Kidney (tissue), 22 donors: ENCODE measurements at regions of chr12 and their contacts with region 1.

Region 1: GRCh38 chr12:9750276-9751203 is 10.2 kb downstream of the CD69 start:
- DNase-seq: peak in 4 of 5 donors; percentile 18 to 83 (median 68)
- H3K4me3 ChIP-seq: peak overlapping the region in 2 of 3 donors; percentile 32 to 38
- H3K27ac ChIP-seq: no peak overlapping the region
- H3K4me1 ChIP-seq: no peaks in the 10 kb centered on the region
- H3K27me3 ChIP-seq: no peaks in the 10 kb centered on the region
- CTCF ChIP-seq: peak; percentile 88

Region 2: GRCh38 chr12:9925708-9926393 is 175.3 kb after region 1 on chr12:
- intact Hi-C with region 1: loop called (anchors 10 kb)
- DNase-seq: peak in 2 of 5 donors; percentile 28 to 49
- H3K4me3 ChIP-seq: peak overlapping the region in 2 of 3 donors; percentile 37 to 58
- H3K27ac ChIP-seq: no peak overlapping the region
- H3K4me1 ChIP-seq: no peaks in the 10 kb centered on the region
- H3K27me3 ChIP-seq: no peaks in the 10 kb centered on the region
- CTCF ChIP-seq: peak; percentile 43